ENCODE measurements at regions of chr2 and their contacts with region 1.

Region 1: GRCh38 chr2:74482801-74483674 is at the starts of genes CCDC142 and TTC31:
- DNase-seq: peak; percentile 87 to 96 (median 93)
- H3K4me3 ChIP-seq: peak within 1 kb of the TSS; percentile 99
- H3K4me3 Mint-ChIP-seq: peak within 1 kb of the TSS; percentile 98 to 100 (median 100)
- H3K27ac ChIP-seq: peak within 1 kb of the TSS; percentile 89
- H3K27ac Mint-ChIP-seq: peak within 1 kb of the TSS; percentile 95 to 100 (median 100)
- H3K4me1 ChIP-seq: peaks cover 25% of the 10 kb centered on the region
- H3K4me1 Mint-ChIP-seq: peaks cover 32 to 56% (median 45%) of the 10 kb centered on the region in 3 donors
- H3K27me3 ChIP-seq: no peaks in the 10 kb centered on the region
- H3K27me3 Mint-ChIP-seq: no peaks in the 10 kb centered on the region
- total RNA-seq, gene CCDC142: 20.3 to 22.8 TPM
- total RNA-seq, gene TTC31: 26.4 to 28.0 TPM

Region 2: DNA sequence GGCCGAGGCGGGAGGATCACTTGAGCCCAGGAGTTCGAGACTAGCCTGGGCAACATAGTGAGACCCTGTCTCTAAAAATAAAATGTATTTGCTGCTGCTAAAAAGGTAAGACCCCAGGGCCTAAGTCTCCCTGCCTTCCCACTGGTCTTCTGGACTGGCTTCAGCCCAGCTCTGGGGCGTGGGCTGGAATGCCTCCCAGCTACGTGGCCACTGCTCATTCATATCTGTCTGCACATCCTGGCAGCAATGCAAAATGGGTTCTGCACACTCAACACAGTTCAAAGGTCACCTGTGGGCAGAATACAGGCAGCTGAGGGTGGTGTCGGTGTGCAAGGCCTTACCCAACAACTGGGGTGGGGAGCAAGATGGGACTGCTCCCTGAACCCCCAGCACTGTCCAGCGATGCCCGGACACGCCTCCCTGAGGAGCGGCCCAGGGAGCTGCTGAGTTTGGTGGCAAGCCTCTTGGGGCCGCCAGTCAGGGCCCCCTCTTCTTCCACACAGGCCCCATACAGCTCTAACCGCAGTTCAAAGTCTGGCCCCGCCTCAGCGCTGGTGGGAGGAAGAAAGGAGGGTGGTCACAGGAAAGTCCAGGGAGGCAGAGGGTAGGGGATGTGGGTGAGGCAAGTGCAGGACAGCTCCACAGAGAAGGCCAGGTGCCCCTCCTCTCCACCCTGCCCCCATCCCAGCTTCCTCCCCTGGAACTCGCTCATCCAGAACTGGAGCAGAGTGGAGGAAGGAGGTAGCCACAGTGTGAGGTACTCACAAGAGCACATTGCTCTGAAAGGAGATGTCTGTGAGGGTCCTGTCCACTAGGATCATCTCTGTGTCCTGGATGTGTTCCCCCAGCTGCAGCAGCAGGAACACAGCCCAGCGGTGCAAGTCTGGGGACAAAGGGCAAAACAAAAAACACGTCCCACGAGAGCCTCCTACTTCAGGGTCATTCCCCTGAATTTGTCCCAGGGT is 53.3 kb before region 1 on chr2:
- CTCF ChIA-PET with region 1: no interaction called
- POLR2A ChIA-PET with region 1: no interaction called
- DNase-seq: no peak
- H3K4me3 ChIP-seq: no peak overlapping the region
- H3K4me3 Mint-ChIP-seq: no peak overlapping the region
- H3K27ac ChIP-seq: no peak overlapping the region
- H3K27ac Mint-ChIP-seq: peak overlapping the region in 1 of 8 donors; percentile 29
- H3K4me1 ChIP-seq: no peaks in the 10 kb centered on the region
- H3K4me1 Mint-ChIP-seq: no peaks in the 10 kb centered on the region
- H3K27me3 ChIP-seq: no peaks in the 10 kb centered on the region
- H3K27me3 Mint-ChIP-seq: no peaks in the 10 kb centered on the region

Region 3: DNA sequence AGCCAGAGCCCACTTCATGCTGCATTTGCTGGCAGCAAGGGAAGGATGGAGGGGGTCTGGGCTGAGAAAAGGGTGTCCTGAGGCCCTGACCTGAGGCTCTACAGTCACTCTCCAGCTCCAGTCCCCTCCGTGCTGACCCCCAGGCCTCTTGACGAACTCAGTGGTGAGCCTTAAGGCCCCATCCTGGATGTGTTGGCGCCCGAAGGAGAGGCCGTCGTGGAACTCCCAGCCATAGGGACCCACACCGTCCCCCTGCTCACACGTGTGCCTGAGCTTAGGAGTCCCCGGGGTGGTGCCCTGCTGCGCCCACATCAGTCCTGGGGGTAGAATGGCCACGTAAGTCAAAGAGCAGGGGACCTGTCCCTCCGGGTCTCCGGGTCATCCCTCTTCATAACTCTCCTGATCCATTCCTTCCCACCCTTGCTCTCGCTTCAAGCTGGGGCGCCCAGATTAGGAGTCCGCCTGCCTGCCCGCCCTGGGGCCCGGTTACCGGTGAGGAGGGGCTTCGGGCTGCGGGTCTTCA is 18.6 kb before region 1 on chr2:
- CTCF ChIA-PET with region 1: interaction called, 83 read pairs
- POLR2A ChIA-PET with region 1: interaction called, 9 read pairs
- DNase-seq: no peak
- H3K4me3 ChIP-seq: peak overlapping the region; percentile 80
- H3K4me3 Mint-ChIP-seq: peak overlapping the region; percentile 79 to 99 (median 98)
- H3K27ac ChIP-seq: peak overlapping the region; percentile 82
- H3K27ac Mint-ChIP-seq: peak overlapping the region; percentile 53 to 99 (median 76)
- H3K4me1 ChIP-seq: peaks cover 10% of the 10 kb centered on the region
- H3K4me1 Mint-ChIP-seq: peaks cover 18 to 40% (median 32%) of the 10 kb centered on the region in 3 donors
- H3K27me3 ChIP-seq: no peaks in the 10 kb centered on the region
- H3K27me3 Mint-ChIP-seq: peaks cover 0 to 2% of the 10 kb centered on the region in 2 donors

Region 4: DNA sequence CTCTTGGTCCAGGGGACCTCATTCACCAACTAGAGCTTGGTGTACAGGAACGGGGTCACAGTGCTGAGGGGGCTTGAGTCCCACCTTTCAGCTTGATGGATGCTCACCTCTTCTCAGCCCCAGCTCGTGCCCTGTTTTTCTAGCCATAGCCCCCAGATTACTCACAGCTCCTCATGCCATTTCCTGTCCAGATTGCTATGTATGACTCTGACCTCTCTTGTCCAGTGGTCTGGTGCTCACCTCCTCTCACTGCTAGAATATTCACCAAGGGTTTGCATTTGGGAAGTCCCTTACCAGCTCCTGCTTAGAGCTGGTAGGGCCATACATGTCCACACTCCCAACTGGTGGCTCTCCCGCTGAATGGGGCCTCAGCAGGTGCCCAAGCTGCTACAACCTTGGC is 10.5 kb after region 1 on chr2:
- CTCF ChIA-PET with region 1: interaction called, 10 read pairs
- POLR2A ChIA-PET with region 1: no interaction called
- DNase-seq: no peak
- H3K4me3 ChIP-seq: no peak overlapping the region
- H3K4me3 Mint-ChIP-seq: no peak overlapping the region
- H3K27ac ChIP-seq: no peak overlapping the region
- H3K27ac Mint-ChIP-seq: peak overlapping the region in 1 of 8 donors; percentile 40
- H3K4me1 ChIP-seq: peaks cover 9% of the 10 kb centered on the region
- H3K4me1 Mint-ChIP-seq: peaks cover 5 to 11% (median 11%) of the 10 kb centered on the region in 3 donors
- H3K27me3 ChIP-seq: peaks cover 3% of the 10 kb centered on the region
- H3K27me3 Mint-ChIP-seq: peaks cover 4% of the 10 kb centered on the region in 2 donors

Region 5: DNA sequence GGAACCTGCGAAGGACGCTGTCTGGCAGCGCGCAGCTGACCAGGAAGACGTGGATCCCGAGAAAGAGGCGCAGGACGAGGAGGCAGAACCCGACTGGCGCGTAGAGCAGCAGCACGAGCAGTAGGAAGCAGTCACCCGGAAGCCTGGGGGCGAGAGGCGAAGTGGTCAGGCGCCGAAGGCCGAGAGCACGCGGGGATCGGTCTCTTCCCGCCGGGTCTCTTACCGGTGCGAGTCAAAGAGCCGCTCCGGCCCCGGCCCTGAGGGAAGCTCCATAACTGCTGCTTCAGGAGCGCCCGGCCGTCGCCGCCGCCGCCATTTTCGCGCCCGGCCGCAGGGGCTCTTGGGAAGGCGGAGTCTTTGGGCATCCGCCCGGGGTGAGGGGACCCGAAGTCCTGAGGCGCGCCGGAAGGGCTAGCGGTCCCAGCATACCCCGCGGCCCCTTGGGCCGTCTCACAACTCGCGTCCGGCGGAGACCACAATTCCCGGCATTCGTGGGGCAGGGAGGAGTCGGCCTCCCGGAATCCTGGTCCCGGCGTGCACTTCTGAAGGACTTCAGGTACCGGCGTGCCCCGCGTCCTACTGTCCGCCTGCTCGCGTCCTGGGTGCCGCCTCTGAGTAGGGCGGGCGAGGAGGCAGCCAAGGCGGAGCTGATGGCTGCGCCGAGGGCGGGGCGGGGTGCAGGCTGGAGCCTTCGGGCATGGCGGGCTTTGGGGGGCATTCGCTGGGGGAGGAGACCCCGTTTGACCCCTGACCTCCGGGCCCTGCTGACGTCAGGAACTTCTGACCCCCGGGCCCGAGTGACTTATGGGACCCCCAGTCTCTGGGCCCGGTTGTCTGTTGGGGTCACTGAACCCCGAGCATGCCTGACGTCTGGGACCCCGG is 46.6 kb after region 1 on chr2 and contains the starts of genes AUP1 and HTRA2:
- CTCF ChIA-PET with region 1: interaction called, 42 read pairs
- POLR2A ChIA-PET with region 1: interaction called, 12 read pairs
- DNase-seq: peak; percentile 79 to 89 (median 84)
- H3K4me3 ChIP-seq: peak within 1 kb of the TSS; percentile 94
- H3K4me3 Mint-ChIP-seq: peak within 1 kb of the TSS; percentile 87 to 97 (median 95)
- H3K27ac ChIP-seq: peak within 1 kb of the TSS; percentile 86
- H3K27ac Mint-ChIP-seq: peak within 1 kb of the TSS; percentile 51 to 98 (median 95)
- H3K4me1 ChIP-seq: peaks cover 28% of the 10 kb centered on the region
- H3K4me1 Mint-ChIP-seq: peaks cover 32 to 44% (median 38%) of the 10 kb centered on the region in 3 donors
- H3K27me3 ChIP-seq: no peaks in the 10 kb centered on the region
- H3K27me3 Mint-ChIP-seq: peaks cover 0 to 2% of the 10 kb centered on the region in 2 donors
- total RNA-seq, gene AUP1: 219 to 225 TPM
- total RNA-seq, gene HTRA2: 81.0 to 82.1 TPM

Region 6: DNA sequence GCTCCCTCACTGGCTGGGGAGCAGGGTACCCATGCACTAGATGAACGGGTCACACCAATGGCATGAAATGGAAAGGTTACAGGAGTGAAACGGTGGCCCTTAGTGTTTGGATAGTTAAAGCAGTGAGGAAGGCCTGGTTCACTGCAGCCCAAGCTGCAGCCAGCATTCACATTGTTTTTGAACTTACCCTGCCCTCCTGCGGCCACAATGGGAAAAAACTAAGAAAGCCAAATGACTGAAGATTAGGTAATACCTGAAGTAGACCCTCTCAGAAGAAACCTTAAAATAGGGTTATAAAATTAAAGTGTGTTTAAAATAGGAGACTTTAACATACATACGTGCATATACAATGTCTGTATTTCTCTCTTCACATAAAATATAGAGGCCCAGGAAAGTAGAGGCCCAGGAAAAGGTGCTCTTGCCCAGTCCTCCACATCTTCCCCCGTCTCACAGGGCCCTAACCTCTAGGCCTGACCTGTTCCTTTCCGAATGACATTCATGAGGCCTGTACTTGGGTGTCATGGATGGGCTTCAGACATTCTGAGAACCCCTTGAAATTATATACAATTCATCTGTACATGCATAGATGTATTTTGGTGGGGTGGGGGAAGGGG is 104.7 kb after region 1 on chr2:
- CTCF ChIA-PET with region 1: interaction called, 68 read pairs
- POLR2A ChIA-PET with region 1: no interaction called
- DNase-seq: peak in 4 of 5 donors; percentile 35 to 68 (median 56)
- H3K4me3 ChIP-seq: no peak overlapping the region
- H3K4me3 Mint-ChIP-seq: no peak overlapping the region
- H3K27ac ChIP-seq: no peak overlapping the region
- H3K27ac Mint-ChIP-seq: peak overlapping the region in 1 of 8 donors; percentile 66
- H3K4me1 ChIP-seq: no peaks in the 10 kb centered on the region
- H3K4me1 Mint-ChIP-seq: peaks cover 0 to 8% (median 5%) of the 10 kb centered on the region in 3 donors
- H3K27me3 ChIP-seq: peaks cover 2% of the 10 kb centered on the region
- H3K27me3 Mint-ChIP-seq: peaks cover 4 to 22% of the 10 kb centered on the region in 2 donors